CD8-positive, alpha-beta T cell (primary cell): ENCODE measurements at regions of chr12 and their contacts with region 1.

Region 1: DNA sequence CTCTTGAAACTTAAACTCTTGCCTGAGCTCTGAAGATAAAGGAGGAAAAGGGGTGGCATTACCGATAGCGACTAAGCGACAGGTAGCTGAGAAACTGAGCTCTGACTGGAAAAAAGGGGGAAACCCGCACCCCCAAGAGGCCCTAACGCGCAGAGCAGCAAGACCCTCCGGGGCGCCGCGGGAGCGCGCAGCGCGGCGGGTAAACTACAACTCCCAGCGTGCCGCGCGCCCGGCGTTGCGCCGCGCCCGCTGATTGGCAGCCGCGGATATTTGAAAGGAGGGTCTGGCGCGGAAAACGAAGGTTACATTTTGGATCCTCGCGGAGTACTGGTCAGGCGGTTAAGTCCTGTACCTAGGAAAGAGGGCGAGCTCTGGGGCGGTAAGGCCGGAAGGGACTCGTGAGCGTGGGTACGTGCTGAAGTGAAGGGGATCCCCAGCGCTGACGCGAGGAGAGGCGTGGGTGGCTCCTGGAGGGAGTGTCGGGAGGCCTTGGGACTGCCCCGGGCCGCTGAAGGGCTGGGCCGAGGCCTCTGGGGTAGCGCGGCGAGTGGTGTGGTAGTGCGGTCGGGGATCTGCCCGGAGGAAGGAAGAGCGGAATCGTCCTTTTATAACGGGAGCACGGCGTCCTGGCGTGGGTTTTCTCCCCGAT is at the start of gene ESPL1:
- DNase-seq: peak; percentile 67 to 94 (median 84)
- ATAC-seq: peak; percentile 95
- H3K4me3 ChIP-seq: peak within 1 kb of the TSS; percentile 66 to 69
- H3K4me3 Mint-ChIP-seq: peak within 1 kb of the TSS; percentile 97
- H3K27ac ChIP-seq: peak within 1 kb of the TSS; percentile 25 to 68
- H3K27ac Mint-ChIP-seq: peak within 1 kb of the TSS; percentile 94
- H3K4me1 ChIP-seq: peaks cover 5% of the 10 kb centered on the region
- H3K4me1 Mint-ChIP-seq: peaks cover 17% of the 10 kb centered on the region
- H3K27me3 ChIP-seq: no peaks in the 10 kb centered on the region
- H3K27me3 Mint-ChIP-seq: no peaks in the 10 kb centered on the region
- CTCF ChIP-seq: peak; percentile 45
- total RNA-seq, gene ESPL1: 0.56 to 1.7 TPM

Region 2: DNA sequence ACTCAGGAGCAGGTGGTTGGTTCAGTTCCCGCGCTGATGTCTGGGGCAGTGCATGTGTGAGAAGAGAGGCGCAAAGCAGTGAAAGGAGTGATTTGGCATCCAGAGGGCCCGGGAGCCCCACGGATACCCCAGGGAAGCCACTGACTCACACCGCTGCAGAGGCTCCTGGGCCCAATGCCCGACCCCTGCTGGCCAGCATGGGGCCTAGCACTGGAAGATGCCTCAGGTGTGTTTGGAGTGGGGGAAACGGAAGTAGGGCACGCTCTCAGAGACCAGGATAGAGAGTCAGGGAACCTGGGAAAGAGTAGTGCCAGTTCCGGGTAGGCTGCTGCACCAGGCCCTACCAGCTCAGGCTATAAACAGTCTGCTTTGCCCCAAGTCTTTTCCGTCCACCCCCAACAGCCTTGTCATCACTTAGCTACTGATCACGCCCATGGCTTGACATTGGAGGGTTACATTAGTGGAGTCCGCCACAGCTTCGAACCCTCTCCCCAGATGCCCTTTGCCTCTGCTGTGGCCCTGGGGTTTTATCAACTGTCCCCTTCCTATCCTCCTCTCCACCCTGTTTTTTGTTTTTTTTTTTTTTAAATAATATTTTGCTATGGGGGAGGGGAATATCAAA is 77.9 kb before region 1 on chr12:
- CTCF ChIA-PET with region 1: interaction called, 22 read pairs
- POLR2A ChIA-PET with region 1: interaction called, 4 read pairs
- intact Hi-C with region 1: no loop called
- DNase-seq: peak in 8 of 9 experiments; percentile 32 to 71 (median 66)
- ATAC-seq: peak; percentile 99
- H3K4me3 ChIP-seq: no peak overlapping the region
- H3K4me3 Mint-ChIP-seq: no peak overlapping the region
- H3K27ac ChIP-seq: peak overlapping the region in 1 of 2 experiments; percentile 29
- H3K27ac Mint-ChIP-seq: peak overlapping the region; percentile 66
- H3K4me1 ChIP-seq: peaks cover 10% of the 10 kb centered on the region
- H3K4me1 Mint-ChIP-seq: peaks cover 30% of the 10 kb centered on the region
- H3K27me3 ChIP-seq: no peaks in the 10 kb centered on the region
- H3K27me3 Mint-ChIP-seq: no peaks in the 10 kb centered on the region
- CTCF ChIP-seq: peak; percentile 47

Region 3: DNA sequence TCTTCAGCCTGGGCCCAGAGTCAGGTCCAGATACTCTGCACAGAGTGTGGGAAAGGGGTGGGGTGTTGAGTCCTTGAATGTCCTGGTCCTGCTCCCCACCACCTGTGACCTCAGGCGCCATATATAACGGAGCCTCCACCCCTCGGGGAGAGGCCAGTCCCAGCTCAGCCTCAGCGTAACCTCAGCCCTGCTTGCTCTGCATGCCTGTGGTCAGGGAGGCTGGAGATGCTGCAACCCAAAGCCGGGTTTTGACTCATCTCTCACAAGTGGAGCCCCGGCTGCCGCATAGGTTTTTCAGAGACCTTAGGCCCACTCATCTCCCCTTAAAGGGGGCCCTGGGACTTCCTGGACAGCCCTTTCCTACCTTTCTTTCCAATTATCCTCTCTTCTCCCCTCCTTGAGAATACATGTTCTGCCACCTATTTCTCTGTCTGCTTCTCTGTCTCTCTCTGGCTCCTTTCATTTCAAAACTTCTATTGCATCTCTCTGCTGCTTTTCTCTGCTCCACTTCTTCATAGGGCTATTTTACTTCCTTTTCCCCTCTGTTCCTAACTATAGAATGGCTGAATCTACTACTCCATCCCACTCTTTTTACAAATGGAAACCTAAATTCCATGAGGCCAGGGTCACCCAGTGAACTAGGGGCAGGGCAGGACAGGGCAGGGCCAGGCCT is 62.2 kb before region 1 on chr12:
- CTCF ChIA-PET with region 1: interaction called, 172 read pairs
- POLR2A ChIA-PET with region 1: interaction called, 3 read pairs
- intact Hi-C with region 1: no loop called
- DNase-seq: peak in 8 of 9 experiments; percentile 43 to 74 (median 69)
- ATAC-seq: peak; percentile 53
- H3K4me3 ChIP-seq: peak overlapping the region; percentile 68 to 71
- H3K4me3 Mint-ChIP-seq: peak overlapping the region; percentile 84
- H3K27ac ChIP-seq: peak overlapping the region; percentile 48 to 71
- H3K27ac Mint-ChIP-seq: peak overlapping the region; percentile 90
- H3K4me1 ChIP-seq: peaks cover 70% of the 10 kb centered on the region
- H3K4me1 Mint-ChIP-seq: peaks cover 71% of the 10 kb centered on the region
- H3K27me3 ChIP-seq: no peaks in the 10 kb centered on the region
- H3K27me3 Mint-ChIP-seq: no peaks in the 10 kb centered on the region
- CTCF ChIP-seq: no peak

Region 4: GRCh38 chr12:53220801-53221202 is 47.3 kb before region 1 on chr12:
- CTCF ChIA-PET with region 1: interaction called, 172 read pairs
- POLR2A ChIA-PET with region 1: interaction called, 32 read pairs
- intact Hi-C with region 1: loop called (anchors 1 kb)
- DNase-seq: peak; percentile 46 to 93 (median 75)
- ATAC-seq: peak; percentile 60
- H3K4me3 ChIP-seq: peak overlapping the region; percentile 69 to 88
- H3K4me3 Mint-ChIP-seq: peak overlapping the region; percentile 99
- H3K27ac ChIP-seq: peak overlapping the region; percentile 66 to 91
- H3K27ac Mint-ChIP-seq: peak overlapping the region; percentile 93
- H3K4me1 ChIP-seq: peaks cover 67% of the 10 kb centered on the region
- H3K4me1 Mint-ChIP-seq: peaks cover 82% of the 10 kb centered on the region
- H3K27me3 ChIP-seq: no peaks in the 10 kb centered on the region
- H3K27me3 Mint-ChIP-seq: no peaks in the 10 kb centered on the region
- CTCF ChIP-seq: no peak

Region 5: DNA sequence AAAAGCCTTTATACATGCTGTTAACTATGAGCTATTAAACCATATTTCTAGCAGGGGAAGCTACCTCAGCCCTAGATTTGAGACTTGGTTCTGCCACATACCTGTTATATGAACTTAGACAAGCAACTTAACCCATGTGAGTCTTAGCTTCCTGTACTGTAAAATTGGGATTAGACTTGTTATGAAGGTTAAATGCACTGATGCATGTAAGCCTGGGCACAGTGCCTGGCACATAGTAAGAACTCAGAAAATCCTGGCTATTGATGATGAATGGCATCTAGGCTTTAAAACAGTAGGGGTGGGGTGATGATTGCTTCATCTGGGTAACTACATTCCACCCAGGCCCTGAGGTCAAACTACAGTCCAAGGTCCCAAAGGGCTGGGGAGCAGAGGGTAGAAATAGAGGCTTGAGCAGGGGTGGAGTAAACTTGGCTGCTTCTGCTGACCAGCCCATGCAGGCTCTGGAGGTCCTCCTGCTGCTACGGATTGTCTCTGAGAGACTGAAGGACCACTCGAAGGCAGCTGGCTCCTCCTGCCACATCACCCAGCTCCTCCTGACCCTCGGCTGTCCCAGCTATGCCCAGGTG is 11.3 kb after region 1 on chr12:
- CTCF ChIA-PET with region 1: interaction called, 15 read pairs
- POLR2A ChIA-PET with region 1: interaction called, 7 read pairs
- intact Hi-C with region 1: no loop called
- DNase-seq: no peak
- ATAC-seq: no peak
- H3K4me3 ChIP-seq: no peak overlapping the region
- H3K4me3 Mint-ChIP-seq: no peak overlapping the region
- H3K27ac ChIP-seq: no peak overlapping the region
- H3K27ac Mint-ChIP-seq: no peak overlapping the region
- H3K4me1 ChIP-seq: no peaks in the 10 kb centered on the region
- H3K4me1 Mint-ChIP-seq: no peaks in the 10 kb centered on the region
- H3K27me3 ChIP-seq: no peaks in the 10 kb centered on the region
- H3K27me3 Mint-ChIP-seq: no peaks in the 10 kb centered on the region
- CTCF ChIP-seq: no peak

Region 6: GRCh38 chr12:53295070-53295890 is 27.2 kb after region 1 on chr12 and contains the start of gene PFDN5:
- CTCF ChIA-PET with region 1: interaction called, 4 read pairs
- POLR2A ChIA-PET with region 1: interaction called, 14 read pairs
- intact Hi-C with region 1: loop called (anchors 1 kb)
- DNase-seq: peak; percentile 72 to 95 (median 87)
- ATAC-seq: peak; percentile 92
- H3K4me3 ChIP-seq: peak within 1 kb of the TSS; percentile 75 to 88
- H3K4me3 Mint-ChIP-seq: peak within 1 kb of the TSS; percentile 99
- H3K27ac ChIP-seq: peak within 1 kb of the TSS; percentile 80 to 82
- H3K27ac Mint-ChIP-seq: peak within 1 kb of the TSS; percentile 99
- H3K4me1 ChIP-seq: peaks cover 28% of the 10 kb centered on the region
- H3K4me1 Mint-ChIP-seq: peaks cover 51% of the 10 kb centered on the region
- H3K27me3 ChIP-seq: no peaks in the 10 kb centered on the region
- H3K27me3 Mint-ChIP-seq: no peaks in the 10 kb centered on the region
- CTCF ChIP-seq: no peak
- total RNA-seq, gene PFDN5: 741 to 751 TPM

Region 7: DNA sequence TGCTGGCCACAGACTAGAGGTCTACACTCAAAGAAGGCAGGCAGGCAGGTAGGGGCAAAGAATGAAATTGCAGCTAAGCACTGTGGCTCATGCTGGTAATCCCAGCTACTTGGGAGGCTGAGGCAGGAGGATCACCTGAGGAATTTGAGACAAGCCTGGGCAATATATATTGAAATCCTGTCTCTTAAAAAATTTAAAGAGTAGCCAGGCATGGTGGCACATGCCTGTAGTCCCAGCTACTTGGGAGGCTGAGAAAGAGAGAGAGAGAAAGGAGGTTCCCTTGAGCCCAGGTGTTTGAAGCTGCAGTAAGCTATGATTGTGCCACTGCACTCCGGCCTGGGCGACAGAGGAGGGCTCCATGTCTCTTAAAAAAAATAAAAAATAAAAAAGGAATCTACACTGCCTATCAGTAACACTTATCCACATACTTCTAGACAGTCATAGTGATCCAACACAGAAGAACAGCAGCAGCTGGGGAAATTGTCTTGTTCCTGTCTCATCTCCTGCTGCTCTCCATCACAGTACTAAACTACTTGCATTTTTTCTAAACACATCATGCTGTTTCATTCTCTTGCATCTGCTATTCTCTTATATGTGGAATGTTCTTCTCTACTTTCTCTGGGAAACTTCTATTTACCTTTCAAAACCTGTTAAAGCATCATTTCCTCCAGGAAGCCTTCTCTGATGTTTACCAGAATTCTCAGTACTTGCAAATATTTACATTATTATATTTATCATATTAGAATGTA is 300.9 kb after region 1 on chr12:
- CTCF ChIA-PET with region 1: no interaction called
- POLR2A ChIA-PET with region 1: no interaction called
- intact Hi-C with region 1: no loop called
- DNase-seq: no peak
- ATAC-seq: no peak
- H3K4me3 ChIP-seq: no peak overlapping the region
- H3K4me3 Mint-ChIP-seq: no peak overlapping the region
- H3K27ac ChIP-seq: no peak overlapping the region
- H3K27ac Mint-ChIP-seq: no peak overlapping the region
- H3K4me1 ChIP-seq: peaks cover 30% of the 10 kb centered on the region
- H3K4me1 Mint-ChIP-seq: peaks cover 48% of the 10 kb centered on the region
- H3K27me3 ChIP-seq: no peaks in the 10 kb centered on the region
- H3K27me3 Mint-ChIP-seq: no peaks in the 10 kb centered on the region
- CTCF ChIP-seq: no peak